HepG2 (cell line): ENCODE measurements at regions of chr10 and their contacts with region 1.

Region 1: DNA sequence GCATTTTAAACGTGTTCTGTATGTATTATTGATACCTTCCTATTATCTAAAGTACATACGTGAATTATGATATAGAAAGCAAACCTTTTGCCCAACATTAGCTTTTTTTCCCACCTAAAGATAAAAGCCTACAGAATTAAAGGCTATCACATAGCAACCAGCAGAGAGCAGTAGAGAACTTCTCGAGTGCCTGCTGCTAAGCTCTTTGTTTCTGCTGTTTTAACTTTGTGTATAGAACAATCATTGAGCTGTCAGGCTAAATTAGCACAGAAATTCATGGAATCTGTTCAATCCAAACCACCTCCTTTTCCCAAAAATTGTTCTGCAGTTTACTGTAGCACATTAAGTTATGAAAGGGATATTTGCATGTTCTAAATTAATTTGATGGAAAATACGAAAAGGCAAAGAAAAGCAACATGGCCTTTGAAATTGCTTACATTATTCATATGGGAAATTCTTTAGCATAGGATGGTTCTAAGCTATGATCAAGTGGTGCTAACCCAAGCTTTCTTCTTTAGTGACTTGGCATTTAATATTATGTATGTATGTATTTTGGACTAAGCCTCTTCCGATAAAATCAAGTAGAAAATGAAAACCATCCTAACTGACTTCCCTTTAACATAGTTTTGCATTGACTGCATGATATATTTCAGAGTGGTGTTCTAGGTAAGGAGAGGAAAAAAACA is 1288.5 kb downstream of the GATA3 start:
- DNase-seq: peak; percentile 33
- ATAC-seq: peak; percentile 71
- H3K4me3 ChIP-seq: no peak overlapping the region
- H3K27ac ChIP-seq: no peak overlapping the region
- H3K4me1 ChIP-seq: no peaks in the 10 kb centered on the region
- H3K27me3 ChIP-seq: no peaks in the 10 kb centered on the region; a peak in 1 of 5 replicates
- CTCF ChIP-seq: peak; percentile 62
- EP300 ChIP-seq: no peak
- POLR2A ChIP-seq: no peak
- RAD21 ChIP-seq: no peak

Region 2: GRCh38 chr10:11036407-11037011 is 1693.5 kb after region 1 on chr10:
- CTCF ChIA-PET with region 1: interaction called, 13 read pairs
- POLR2A ChIA-PET with region 1: no interaction called
- in situ Hi-C with region 1: no loop called
- intact Hi-C with region 1: loop called (anchors 1 kb)
- DNase-seq: peak; percentile 11
- ATAC-seq: peak; percentile 82
- H3K4me3 ChIP-seq: no peak overlapping the region
- H3K27ac ChIP-seq: no peak overlapping the region
- H3K4me1 ChIP-seq: no peaks in the 10 kb centered on the region
- H3K27me3 ChIP-seq: no peaks in the 10 kb centered on the region
- CTCF ChIP-seq: peak; percentile 44; the same call in 1 of the 2 replicates
- EP300 ChIP-seq: no peak
- POLR2A ChIP-seq: no peak
- RAD21 ChIP-seq: no peak

Region 3: DNA sequence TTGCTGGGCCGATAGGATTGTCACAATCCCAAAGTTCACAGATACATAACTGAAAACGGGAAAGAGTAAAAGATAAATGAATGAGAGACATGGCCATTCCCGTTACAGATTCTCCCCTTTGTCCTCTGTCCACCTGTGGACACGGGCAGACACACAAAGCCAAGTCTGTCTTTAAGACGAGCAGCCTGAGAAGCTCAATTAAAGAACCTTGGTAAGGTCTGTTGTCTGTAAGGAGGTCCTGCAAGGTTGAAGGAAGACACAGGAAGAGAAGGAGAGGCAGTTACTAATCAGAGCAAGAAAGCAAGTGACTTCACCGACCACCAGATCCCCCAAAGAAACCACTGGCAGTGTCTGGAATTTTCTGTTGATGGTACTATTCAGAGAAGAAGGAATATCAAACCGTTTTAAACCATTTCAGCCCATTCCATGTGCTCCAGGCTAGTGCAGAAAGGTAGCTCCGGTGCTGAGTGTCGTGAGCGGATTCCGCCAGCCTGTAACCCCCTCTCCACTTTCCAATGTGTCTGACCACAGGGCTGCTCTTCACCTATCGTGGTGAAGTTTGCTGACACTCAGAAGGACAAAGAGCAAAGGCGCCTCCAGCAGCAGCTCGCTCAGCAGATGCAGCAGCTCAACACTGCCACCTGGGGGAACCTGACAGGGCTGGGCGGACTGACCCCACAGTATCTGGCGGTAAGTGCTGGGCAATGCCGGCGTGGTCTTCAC is 1927.3 kb after region 1 on chr10:
- CTCF ChIA-PET with region 1: interaction called, 3 read pairs
- POLR2A ChIA-PET with region 1: no interaction called
- in situ Hi-C with region 1: no loop called
- intact Hi-C with region 1: loop called (anchors 1 kb)
- DNase-seq: peak; percentile 61
- ATAC-seq: peak; percentile 100
- H3K4me3 ChIP-seq: no peak overlapping the region
- H3K27ac ChIP-seq: no peak overlapping the region
- H3K4me1 ChIP-seq: 0 out of 2 replicates have a peak, but pooled peaks cover 5% of the 10 kb centered on the region
- H3K27me3 ChIP-seq: peaks cover 3 to 20% of the 10 kb centered on the region in 2 experiments; a peak in 3 of 5 replicates
- CTCF ChIP-seq: peak; percentile 94
- EP300 ChIP-seq: no peak
- POLR2A ChIP-seq: no peak
- RAD21 ChIP-seq: peak; percentile 78